ENCODE measurements at regions of chr10 and their contacts with region 1.

Region 1: DNA sequence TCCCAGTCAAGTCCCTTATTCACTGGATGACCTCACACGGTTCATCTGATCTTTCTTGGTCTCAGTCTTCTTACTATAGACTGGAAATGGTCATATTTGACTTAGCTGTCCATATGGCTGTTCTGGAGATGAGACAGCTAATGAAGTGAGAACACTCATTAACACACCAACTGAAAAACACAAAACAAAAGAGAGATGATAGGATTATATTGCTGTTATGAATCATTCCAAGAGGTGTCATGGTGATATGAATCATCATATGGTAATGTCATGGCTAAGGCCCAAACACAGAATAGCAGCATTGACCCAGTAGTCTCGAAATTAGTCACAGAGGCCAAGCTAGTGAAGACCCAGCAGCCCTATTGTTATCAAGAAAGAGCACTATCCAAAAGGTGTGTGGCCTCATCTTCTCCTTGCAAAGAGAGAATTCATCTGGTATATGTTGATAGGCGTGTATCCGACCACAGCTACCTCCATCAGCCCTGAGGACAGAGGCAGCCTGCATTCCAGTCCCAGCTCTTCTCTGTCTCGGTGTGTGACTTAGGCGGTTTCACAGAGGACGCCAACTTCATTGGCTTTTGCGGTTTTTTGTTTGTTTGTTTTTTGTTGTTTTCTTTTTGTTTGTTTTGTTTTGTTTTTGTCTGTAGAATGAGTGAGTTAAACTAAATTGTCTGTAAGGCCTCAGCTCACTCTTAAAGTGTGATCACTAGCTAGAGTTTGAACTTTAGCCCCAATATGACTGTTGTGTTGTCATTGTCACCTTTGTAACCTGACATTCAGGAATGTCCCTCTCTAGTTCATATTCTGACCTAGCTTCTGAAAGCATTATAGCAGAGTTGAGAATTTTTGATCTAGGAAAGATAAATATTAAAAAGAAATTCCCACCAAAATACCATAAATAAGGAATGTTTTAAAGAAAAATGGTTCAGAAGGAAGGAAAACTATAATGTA is 97.4 kb upstream of the PDCD4 start:
- DNase-seq: peak; percentile 66
- H3K4me3 Mint-ChIP-seq: no peak overlapping the region
- H3K27ac Mint-ChIP-seq: peak overlapping the region; percentile 77
- H3K4me1 Mint-ChIP-seq: peaks cover 47% of the 10 kb centered on the region
- H3K27me3 Mint-ChIP-seq: no peaks in the 10 kb centered on the region

Region 2: GRCh38 chr10:110724116-110724921 is 50.0 kb before region 1 on chr10:
- CTCF ChIA-PET with region 1: no interaction called
- intact Hi-C with region 1: loop called (anchors 1 kb)
- DNase-seq: peak; percentile 48
- H3K4me3 Mint-ChIP-seq: no peak overlapping the region
- H3K27ac Mint-ChIP-seq: no peak overlapping the region
- H3K4me1 Mint-ChIP-seq: peaks cover 42% of the 10 kb centered on the region
- H3K27me3 Mint-ChIP-seq: no peaks in the 10 kb centered on the region

Region 3: GRCh38 chr10:110803830-110804338 is 29.5 kb after region 1 on chr10:
- CTCF ChIA-PET with region 1: interaction called, 3 read pairs
- intact Hi-C with region 1: loop called (anchors 2 kb)
- DNase-seq: peak; percentile 59
- H3K4me3 Mint-ChIP-seq: no peak overlapping the region
- H3K27ac Mint-ChIP-seq: peak overlapping the region; percentile 47
- H3K4me1 Mint-ChIP-seq: peaks cover 34% of the 10 kb centered on the region
- H3K27me3 Mint-ChIP-seq: no peaks in the 10 kb centered on the region

Region 4: GRCh38 chr10:110834629-110835301 is 60.4 kb after region 1 on chr10:
- CTCF ChIA-PET with region 1: no interaction called
- intact Hi-C with region 1: loop called (anchors 2 kb)
- DNase-seq: peak; percentile 58
- H3K4me3 Mint-ChIP-seq: no peak overlapping the region
- H3K27ac Mint-ChIP-seq: peak overlapping the region; percentile 47
- H3K4me1 Mint-ChIP-seq: peaks cover 39% of the 10 kb centered on the region
- H3K27me3 Mint-ChIP-seq: no peaks in the 10 kb centered on the region

Region 5: DNA sequence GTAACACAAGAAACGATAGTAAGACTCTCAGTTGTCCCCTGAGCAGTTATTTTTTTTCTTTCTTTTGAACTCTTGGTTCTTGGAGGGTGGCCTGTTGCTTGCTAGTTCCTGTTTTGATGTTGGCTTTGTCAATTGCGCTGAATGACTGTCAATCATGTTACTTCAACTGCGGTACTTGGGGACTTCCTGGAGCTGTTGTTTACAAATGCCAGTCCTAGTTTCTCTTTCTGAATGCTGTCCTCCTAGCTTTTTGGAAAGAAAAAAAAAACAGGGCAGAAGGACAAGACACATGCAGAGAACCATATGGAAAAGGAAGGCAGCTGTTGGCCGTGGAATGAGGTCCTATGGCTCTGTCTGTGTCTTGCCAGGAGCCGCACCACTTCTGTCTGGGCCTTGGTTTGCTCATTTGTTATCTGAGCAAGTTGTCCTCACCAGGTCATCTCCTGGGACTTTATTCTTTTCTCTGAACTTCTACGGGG is 90.4 kb after region 1 on chr10:
- CTCF ChIA-PET with region 1: interaction called, 3 read pairs
- intact Hi-C with region 1: loop called (anchors 1 kb)
- DNase-seq: peak; percentile 69
- H3K4me3 Mint-ChIP-seq: peak overlapping the region; percentile 58
- H3K27ac Mint-ChIP-seq: peak overlapping the region; percentile 84
- H3K4me1 Mint-ChIP-seq: peaks cover 96% of the 10 kb centered on the region
- H3K27me3 Mint-ChIP-seq: no peaks in the 10 kb centered on the region

Region 6: DNA sequence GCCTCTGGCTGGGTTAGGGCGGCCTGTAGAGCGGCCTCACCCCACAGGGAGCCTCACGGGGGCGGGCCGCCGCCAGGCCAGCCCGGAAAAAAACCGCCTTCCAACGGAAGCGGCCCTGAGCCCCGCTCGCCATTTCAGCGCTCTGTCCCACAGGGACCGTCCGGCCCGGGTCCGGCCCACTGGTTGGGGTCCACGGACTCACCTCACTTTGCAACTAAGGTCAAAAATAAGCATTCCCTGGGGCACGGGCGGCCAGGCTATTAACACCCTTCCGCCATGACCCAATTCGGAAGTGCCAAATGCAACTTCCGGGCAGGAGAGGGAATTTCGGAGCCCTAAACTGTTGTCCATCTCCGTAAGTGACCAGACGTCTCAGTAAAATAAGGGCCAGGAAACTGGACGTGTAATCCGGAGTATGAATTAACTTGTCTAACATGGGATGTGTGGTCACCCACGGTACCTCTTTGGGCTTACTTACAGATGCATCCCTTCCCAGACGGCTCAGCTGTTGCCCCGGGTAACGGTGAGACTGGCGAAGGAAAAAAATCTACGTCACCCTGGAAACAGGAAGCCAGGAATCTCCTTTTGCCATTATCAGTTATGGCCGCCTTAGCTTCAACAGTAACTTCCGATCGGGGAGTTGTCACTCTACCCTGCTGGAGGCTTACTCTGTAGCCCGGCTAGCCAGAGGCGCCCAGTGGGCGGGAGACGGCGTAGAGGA is 144.5 kb after region 1 on chr10 and contains the start of gene BBIP1:
- CTCF ChIA-PET with region 1: interaction called, 3 read pairs
- intact Hi-C with region 1: loop called (anchors 1 kb)
- DNase-seq: no peak
- H3K4me3 Mint-ChIP-seq: peak within 1 kb of the TSS; percentile 97
- H3K27ac Mint-ChIP-seq: peak within 1 kb of the TSS; percentile 98
- H3K4me1 Mint-ChIP-seq: peaks cover 32% of the 10 kb centered on the region
- H3K27me3 Mint-ChIP-seq: no peaks in the 10 kb centered on the region
- total RNA-seq, gene BBIP1: 37.2 to 42.6 TPM

Region 7: DNA sequence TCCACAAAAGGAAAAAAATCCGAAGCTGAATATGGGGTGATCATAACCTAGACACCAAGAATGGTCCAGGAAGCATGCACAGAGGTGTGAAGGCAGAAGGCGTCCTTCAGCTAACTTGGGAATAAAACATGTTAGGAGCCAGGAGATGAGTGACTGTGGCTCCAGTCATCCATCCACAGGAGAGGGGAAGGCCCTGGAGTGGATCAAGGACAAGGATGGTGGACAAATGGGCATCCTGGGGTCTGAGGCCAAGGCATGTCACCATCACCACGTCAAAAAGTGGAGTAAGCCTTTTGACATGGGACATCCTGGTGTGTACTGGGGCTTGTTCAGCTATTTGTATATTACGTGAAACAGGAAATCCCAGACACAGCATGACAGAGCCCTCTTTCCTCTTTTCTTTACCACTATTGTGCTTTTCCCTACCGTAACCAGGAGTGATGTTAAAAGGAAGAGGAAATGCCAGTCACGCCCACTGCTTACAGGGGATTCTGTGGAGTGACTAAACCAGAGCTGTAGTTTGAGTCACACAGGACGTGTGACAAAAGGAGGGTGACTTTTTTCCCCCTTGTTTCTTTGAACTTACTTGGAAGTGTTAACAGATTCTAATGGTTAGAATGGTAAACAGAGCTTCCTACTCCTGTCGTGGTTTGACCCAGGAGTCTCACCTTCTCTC is 1614.9 kb after region 1 on chr10:
- CTCF ChIA-PET with region 1: no interaction called
- intact Hi-C with region 1: loop called (anchors 1 kb)
- DNase-seq: peak; percentile 90
- H3K4me3 Mint-ChIP-seq: peak overlapping the region; percentile 32
- H3K27ac Mint-ChIP-seq: peak overlapping the region; percentile 85
- H3K4me1 Mint-ChIP-seq: peaks cover 70% of the 10 kb centered on the region
- H3K27me3 Mint-ChIP-seq: no peaks in the 10 kb centered on the region